Activated CD8-positive, alpha-beta memory T cell treated with anti-CD3 and anti-CD28 coated beads, Interleukin-2, amount 10 ng/mL, durations not matched to agents 7 days and 5 days (primary cell): ENCODE measurements at regions of chr3 and their contacts with region 1.

Region 1: DNA sequence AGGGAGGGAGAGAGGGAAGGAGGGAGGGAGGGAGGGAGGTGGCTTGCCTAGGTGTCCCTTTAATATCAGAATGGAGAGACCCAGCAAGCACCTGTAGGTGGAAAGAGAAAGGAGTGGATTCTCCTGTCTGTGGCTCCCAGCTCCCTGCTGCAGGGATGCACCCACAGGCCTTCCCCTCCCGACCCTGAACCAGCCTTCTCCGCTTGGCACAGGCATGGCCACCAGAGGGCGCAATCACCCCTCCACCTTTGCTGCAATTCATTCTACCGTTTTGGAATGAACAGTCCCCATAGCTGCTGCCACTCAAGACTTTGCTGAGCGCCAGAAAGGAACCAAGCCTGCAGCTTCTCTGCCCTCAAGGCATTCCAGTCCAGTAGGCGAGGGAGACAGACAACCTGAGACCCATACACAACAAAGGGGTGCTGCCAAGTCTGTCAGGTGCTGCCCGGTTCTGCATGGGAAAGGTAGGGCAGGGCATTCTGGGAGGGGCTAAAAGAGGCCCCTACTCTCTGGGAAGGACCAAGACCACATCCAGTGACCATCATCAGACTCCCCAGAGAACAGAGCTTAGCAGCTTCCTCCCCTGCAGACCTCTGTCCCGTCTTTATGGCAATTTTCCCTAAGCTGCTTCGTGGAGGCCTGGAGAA is 4.9 kb downstream of the TLR9 start:
- DNase-seq: peak; percentile 93
- ATAC-seq: peak; percentile 74
- H3K4me3 Mint-ChIP-seq: peak overlapping the region; percentile 48
- H3K27ac Mint-ChIP-seq: peak overlapping the region; percentile 77
- H3K4me1 Mint-ChIP-seq: peaks cover 87% of the 10 kb centered on the region
- H3K27me3 Mint-ChIP-seq: no peaks in the 10 kb centered on the region

Region 2: GRCh38 chr3:52001443-52001974 is 219.0 kb before region 1 on chr3:
- CTCF ChIA-PET with region 1: interaction called, 16 read pairs
- DNase-seq: peak; percentile 91
- ATAC-seq: peak; percentile 98
- H3K4me3 Mint-ChIP-seq: no peak overlapping the region
- H3K27ac Mint-ChIP-seq: no peak overlapping the region
- H3K4me1 Mint-ChIP-seq: peaks cover 14% of the 10 kb centered on the region
- H3K27me3 Mint-ChIP-seq: peaks cover 13% of the 10 kb centered on the region

Region 3: GRCh38 chr3:52204337-52205073 is 16.0 kb before region 1 on chr3:
- CTCF ChIA-PET with region 1: interaction called, 22 read pairs
- DNase-seq: no peak
- ATAC-seq: peak; percentile 42
- H3K4me3 Mint-ChIP-seq: no peak overlapping the region
- H3K27ac Mint-ChIP-seq: peak overlapping the region; percentile 4
- H3K4me1 Mint-ChIP-seq: peaks cover 51% of the 10 kb centered on the region
- H3K27me3 Mint-ChIP-seq: no peaks in the 10 kb centered on the region

Region 4: DNA sequence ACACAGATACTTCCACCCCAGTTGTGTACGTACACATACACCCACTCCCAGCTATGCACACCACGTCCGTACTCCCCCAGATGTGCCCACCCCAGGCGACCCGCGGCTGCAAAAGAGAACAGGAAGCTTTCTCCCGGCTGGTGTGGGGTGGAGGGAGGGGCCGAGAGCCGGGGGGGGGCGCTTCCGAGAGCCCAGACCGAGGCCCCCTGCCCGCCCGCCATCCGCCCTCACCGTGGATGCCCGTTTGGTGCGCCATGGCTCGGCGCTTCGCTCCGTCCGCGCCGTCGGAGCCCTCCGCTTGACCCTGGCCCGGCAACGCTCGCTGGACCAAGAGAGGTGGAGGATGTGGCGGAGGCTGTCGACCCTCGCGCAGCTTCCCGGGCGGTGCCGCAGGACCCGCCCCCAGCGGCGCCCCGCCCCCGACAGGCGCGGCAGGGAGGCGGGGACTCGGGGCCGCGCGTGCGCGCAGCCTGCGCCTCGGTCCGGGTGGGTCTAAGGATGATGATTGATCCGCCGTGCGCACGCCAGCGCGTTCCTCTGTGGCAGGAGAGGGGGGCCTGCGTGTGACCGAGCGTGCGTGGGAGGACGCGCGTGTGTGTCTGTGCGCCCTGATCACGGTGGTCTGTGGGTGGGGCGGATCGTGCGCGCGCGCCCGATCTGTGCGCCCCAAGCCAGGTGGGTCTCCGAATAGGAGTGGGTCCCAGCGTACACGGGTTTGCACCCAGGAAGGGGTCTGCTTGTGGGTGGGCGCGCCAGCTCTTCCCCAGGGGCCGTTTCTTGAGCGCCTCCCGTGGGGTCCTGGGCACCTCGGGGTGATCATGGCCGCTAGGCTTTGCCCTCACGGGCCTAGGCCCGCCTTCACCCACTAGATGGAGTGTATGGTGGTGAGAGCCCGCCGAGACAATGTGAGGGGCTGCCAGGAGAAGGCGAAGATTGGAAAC is 18.5 kb after region 1 on chr3 and contains the start of gene TWF2:
- CTCF ChIA-PET with region 1: interaction called, 80 read pairs
- DNase-seq: peak; percentile 87
- ATAC-seq: peak; percentile 86
- H3K4me3 Mint-ChIP-seq: peak within 1 kb of the TSS; percentile 96
- H3K27ac Mint-ChIP-seq: peak within 1 kb of the TSS; percentile 95
- H3K4me1 Mint-ChIP-seq: peaks cover 68% of the 10 kb centered on the region
- H3K27me3 Mint-ChIP-seq: no peaks in the 10 kb centered on the region
- total RNA-seq, gene TWF2: 110 to 131 TPM

Region 5: GRCh38 chr3:52270252-52270754 is 49.8 kb after region 1 on chr3:
- CTCF ChIA-PET with region 1: interaction called, 96 read pairs
- DNase-seq: no peak
- ATAC-seq: no peak
- H3K4me3 Mint-ChIP-seq: peak overlapping the region; percentile 69
- H3K27ac Mint-ChIP-seq: peak overlapping the region; percentile 85
- H3K4me1 Mint-ChIP-seq: peaks cover 84% of the 10 kb centered on the region
- H3K27me3 Mint-ChIP-seq: no peaks in the 10 kb centered on the region

Region 6: GRCh38 chr3:52291508-52292181 is 71.1 kb after region 1 on chr3:
- CTCF ChIA-PET with region 1: interaction called, 23 read pairs
- DNase-seq: peak; percentile 75
- ATAC-seq: no peak
- H3K4me3 Mint-ChIP-seq: no peak overlapping the region
- H3K27ac Mint-ChIP-seq: peak overlapping the region; percentile 76
- H3K4me1 Mint-ChIP-seq: peaks cover 35% of the 10 kb centered on the region
- H3K27me3 Mint-ChIP-seq: no peaks in the 10 kb centered on the region

Region 7: DNA sequence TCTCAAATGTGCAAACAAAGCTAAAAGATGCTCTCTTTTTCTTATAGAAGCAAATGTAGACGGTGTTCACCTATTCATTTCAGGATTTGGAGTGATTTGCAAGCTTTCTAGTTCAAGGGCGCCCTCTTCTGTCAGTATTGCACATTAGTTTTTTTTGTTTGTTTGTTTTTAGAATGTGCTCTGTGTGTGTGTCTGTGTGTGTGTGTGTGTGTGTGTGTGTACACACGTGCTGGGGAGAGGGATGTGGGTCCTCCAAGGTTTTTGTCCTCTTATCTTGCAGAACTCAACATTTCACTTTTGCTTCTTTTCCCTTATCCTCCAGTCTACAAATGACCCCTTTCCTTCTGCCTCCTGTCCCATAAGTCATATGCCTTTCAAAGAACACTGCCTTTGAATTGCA is 119.1 kb after region 1 on chr3:
- CTCF ChIA-PET with region 1: interaction called, 144 read pairs
- DNase-seq: peak; percentile 61
- ATAC-seq: peak; percentile 76
- H3K4me3 Mint-ChIP-seq: no peak overlapping the region
- H3K27ac Mint-ChIP-seq: no peak overlapping the region
- H3K4me1 Mint-ChIP-seq: peaks cover 6% of the 10 kb centered on the region
- H3K27me3 Mint-ChIP-seq: no peaks in the 10 kb centered on the region